Heart left ventricle (tissue), 16 donors: ENCODE measurements at regions of chr19 and their contacts with region 1.

Region 1: GRCh38 chr19:16883522-16884178 is 5.1 kb upstream of the F2RL3 start:
- DNase-seq: no peak
- ATAC-seq: no peak
- H3K4me3 ChIP-seq: no peak overlapping the region
- H3K27ac ChIP-seq: no peak overlapping the region
- H3K4me1 ChIP-seq: peaks cover 0 to 33% (median 18%) of the 10 kb centered on the region in 12 donors
- H3K27me3 ChIP-seq: peaks cover 0 to under 1% (median 0%) of the 10 kb centered on the region in 9 donors
- CTCF ChIP-seq: no peak
- POLR2A ChIP-seq: no peak

Region 2: DNA sequence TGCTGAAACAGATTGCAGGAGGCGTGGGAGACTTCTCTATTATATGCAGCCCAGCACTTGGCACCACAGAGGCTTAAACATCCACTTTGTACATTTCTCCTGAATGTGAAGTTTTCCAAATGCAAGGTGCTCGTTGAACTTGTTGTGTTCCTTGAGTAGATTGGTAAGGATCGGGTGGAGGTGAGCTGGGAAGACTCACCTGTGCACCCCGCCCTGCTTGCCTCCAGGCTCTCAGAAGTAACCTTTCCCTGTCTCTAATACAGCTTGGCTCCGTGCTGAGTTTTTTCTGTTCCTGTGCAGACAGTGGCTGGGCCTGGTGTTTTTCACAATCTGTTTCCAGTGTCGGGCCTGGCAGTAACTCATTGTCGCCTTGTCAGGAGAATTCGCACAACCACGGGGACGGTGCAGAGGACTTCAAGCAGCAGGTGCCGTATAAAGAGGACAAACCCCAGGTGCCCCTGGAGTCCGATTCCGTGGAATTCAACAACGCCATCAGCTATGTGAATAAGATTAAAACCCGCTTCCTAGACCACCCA is 42.2 kb before region 1 on chr19:
- intact Hi-C with region 1: loop called in 1 of 10 experiments (anchors 5 kb)
- DNase-seq: peak in 1 of 5 donors; percentile 20
- ATAC-seq: peak; percentile 45 to 74 (median 63)
- H3K4me3 ChIP-seq: no peak overlapping the region
- H3K27ac ChIP-seq: no peak overlapping the region
- H3K4me1 ChIP-seq: peaks cover 0 to 10% (median 0%) of the 10 kb centered on the region in 12 donors
- H3K27me3 ChIP-seq: no peaks in the 10 kb centered on the region
- CTCF ChIP-seq: no peak
- POLR2A ChIP-seq: no peak